ENCODE measurements at regions of chr15 and their contacts with region 1.

Region 1: DNA sequence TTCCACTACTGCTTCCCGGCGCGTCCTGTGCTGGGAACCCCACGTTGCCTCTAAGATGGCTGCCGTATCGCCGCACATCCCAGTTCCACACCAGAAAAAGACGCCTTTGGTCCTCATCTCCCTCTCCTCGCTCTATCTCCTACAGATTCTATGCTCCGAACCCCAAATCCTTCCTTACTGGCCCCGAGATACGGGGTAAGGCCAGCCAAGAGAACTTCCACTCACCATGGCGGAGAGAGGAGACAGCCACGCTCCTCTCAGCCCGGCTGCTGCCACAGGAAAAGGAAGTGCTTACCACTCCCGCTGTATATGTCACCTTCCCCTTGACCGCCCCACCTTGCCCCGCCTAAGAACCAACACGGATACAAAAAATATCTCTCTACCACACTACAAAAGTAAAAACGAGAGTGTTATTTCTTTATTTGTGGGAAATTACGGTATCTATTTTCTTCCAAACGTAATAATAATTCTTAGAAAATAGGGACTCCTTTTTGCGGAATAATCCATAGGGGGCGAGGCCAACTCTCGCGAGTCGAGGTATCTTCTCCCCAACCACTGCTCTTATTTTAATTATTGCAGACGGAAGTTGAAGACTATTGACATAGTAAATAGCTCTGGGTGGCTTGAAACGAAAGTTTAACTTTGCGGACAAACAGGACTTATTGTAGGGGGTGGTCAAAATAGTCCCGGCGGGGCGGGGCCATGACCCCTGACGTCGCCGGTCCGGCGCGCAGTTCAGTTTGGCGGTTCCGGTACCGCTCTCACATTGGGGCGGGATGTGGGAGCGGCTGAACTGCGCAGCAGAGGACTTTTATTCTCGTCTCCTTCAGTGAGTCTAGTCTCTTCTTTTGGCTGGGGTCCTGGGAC is at the starts of genes RPL4 and ZWILCH:
- DNase-seq: peak; percentile 91
- H3K4me3 ChIP-seq: peak within 1 kb of the TSS; percentile 100
- H3K27ac ChIP-seq: peak within 1 kb of the TSS; percentile 85
- H3K4me1 ChIP-seq: peaks cover 53% of the 10 kb centered on the region
- CTCF ChIP-seq: no peak
- total RNA-seq, gene RPL4: 5,185 and 5,381 TPM in 2 replicates
- total RNA-seq, gene ZWILCH: 36.9 and 37.4 TPM in 2 replicates

Region 2: DNA sequence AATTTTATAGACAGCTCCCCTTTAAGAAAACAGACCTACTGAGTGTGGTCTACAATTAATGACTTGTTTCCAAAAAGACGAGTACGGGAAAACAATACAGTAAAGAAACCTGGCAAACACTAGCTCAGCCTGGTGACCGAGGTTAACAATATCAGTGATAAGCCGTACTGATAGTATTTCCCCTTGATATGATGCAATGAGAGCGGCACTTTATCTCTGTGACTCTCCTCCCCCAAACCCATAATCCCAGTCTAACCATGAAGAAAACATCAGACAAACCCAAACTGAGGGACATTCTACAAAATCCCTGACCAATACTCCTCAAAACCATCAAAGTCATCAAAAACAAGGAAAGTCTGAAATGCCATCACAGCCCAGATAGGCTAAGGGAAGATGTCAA is 720.9 kb before region 1 on chr15:
- CTCF ChIA-PET with region 1: no interaction called
- POLR2A ChIA-PET with region 1: no interaction called
- intact Hi-C with region 1: loop called (anchors 10 kb)
- DNase-seq: no peak
- H3K4me3 ChIP-seq: no peak overlapping the region
- H3K27ac ChIP-seq: no peak overlapping the region
- H3K4me1 ChIP-seq: peaks cover 34% of the 10 kb centered on the region
- CTCF ChIP-seq: no peak

Region 3: GRCh38 chr15:66326051-66326450 is 178.7 kb before region 1 on chr15:
- CTCF ChIA-PET with region 1: no interaction called
- POLR2A ChIA-PET with region 1: no interaction called
- intact Hi-C with region 1: no loop called
- DNase-seq: no peak
- H3K4me3 ChIP-seq: no peak overlapping the region
- H3K27ac ChIP-seq: no peak overlapping the region
- H3K4me1 ChIP-seq: no peaks in the 10 kb centered on the region
- CTCF ChIP-seq: no peak

Region 4: DNA sequence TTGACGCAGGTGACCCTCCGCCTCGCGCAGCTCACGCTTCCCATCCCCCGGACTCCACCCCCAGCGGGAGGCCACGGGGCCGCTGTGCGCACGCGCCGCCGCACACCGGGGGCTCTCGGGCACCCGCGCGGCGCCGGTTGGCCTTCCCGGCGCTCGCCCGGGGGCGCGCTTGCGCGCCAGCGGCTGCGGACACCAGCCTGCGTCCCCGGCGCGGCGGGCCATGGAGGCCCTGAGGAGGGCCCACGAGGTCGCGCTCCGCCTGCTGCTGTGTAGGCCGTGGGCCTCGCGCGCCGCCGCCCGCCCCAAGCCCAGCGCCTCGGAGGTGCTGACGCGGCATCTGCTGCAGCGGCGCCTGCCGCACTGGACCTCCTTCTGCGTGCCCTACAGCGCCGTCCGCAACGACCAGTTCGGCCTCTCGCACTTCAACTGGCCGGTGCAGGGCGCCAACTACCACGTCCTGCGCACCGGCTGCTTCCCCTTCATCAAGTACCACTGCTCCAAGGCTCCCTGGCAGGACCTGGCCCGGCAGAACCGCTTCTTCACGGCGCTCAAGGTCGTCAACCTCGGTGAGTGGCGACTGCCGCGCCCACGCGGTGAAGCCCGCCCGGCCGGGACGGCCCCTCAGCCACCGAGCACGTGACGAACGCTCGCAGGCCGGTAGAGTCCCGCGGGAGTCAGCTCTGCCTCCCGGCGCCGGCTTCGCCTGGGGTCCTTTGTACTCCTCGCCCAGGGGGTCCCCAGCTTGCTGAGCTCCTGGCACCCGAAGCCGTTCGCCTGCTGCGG is 1016.4 kb after region 1 on chr15 and contains the start of gene C15orf61:
- CTCF ChIA-PET with region 1: no interaction called
- POLR2A ChIA-PET with region 1: no interaction called
- intact Hi-C with region 1: loop called (anchors 10 kb)
- DNase-seq: peak; percentile 92
- H3K4me3 ChIP-seq: peak within 1 kb of the TSS; percentile 83
- H3K27ac ChIP-seq: peak within 1 kb of the TSS; percentile 65
- H3K4me1 ChIP-seq: peaks cover 25% of the 10 kb centered on the region
- CTCF ChIP-seq: 0 out of 2 replicates have a peak, but pooled peaks have one; percentile 47
- total RNA-seq, gene C15orf61: 13.3 and 18.3 TPM in 2 replicates

Measured in OCI-LY7 (cell line).